A549 (cell line): ENCODE measurements at regions of chr3 and their contacts with region 1.

Region 1: GRCh38 chr3:111080413-111080812 is 8.8 kb downstream of the NECTIN3 start:
- DNase-seq: peak; percentile 33 to 39
- ATAC-seq: peak in 1 of 2 experiments; percentile 73; a peak in 3 of 6 replicates
- H3K4me3 ChIP-seq: no peak overlapping the region
- H3K27ac ChIP-seq: peak overlapping the region in 1 of 2 experiments; percentile 51; a peak in 3 of 6 replicates
- H3K4me1 ChIP-seq: peaks cover 50% of the 10 kb centered on the region
- CTCF ChIP-seq: peak; percentile 69
- EP300 ChIP-seq: no peak
- POLR2A ChIP-seq: no peak
- RAD21 ChIP-seq: peak; percentile 74 to 80

Region 2: DNA sequence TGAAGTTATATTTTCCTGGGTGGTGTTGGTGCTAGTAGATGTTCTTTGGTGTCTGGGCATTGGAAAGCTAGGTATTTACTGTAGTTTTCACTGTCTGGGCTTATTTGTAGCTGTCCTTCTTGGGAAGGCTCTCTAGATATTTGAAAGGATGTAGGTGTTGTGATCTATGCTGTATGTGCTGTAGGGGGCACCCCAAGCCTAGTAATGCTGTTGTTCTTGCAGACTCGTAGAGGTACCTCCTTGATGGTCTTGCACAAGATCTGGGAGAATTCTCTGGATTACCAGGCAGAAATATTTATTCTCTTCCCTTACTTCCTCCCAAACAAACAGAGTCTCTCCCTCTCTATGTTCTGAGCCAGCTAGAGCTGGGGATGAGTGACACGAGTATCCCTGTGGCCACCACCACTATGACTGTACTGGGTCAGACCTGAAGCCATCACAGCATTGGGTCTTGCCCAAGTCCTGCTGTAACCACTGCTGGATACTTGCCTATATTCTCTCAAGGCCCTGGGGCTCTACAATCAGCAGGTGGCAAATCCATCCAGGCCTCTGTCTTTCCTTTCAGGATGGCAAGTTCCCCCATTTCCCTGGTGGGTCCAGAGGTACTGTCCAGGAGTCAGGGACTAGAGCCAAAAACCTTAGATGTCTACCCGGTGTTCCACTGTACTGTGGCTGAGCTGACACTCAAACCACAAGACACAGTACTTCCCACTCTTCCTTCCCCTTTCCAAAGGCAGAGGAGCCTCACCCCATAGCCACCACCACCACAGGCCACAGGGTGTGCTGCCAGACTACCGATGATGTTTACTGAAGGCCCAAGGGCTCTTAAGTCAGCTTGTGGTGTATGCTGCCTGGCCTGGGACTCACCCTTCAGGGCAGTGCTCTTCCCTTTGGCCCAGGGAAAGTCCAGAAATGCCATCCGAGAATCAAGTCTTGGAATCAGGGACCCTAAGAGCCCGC is 1547.9 kb before region 1 on chr3:
- CTCF ChIA-PET with region 1: interaction called, 20 read pairs
- POLR2A ChIA-PET with region 1: no interaction called
- DNase-seq: peak in 1 of 2 experiments; percentile 81
- ATAC-seq: peak; percentile 70 to 92
- H3K4me3 ChIP-seq: no peak overlapping the region
- H3K27ac ChIP-seq: peak overlapping the region in 1 of 2 experiments; percentile 43; a peak in 3 of 6 replicates
- H3K4me1 ChIP-seq: 0 out of 3 replicates have a peak, but pooled peaks cover 4% of the 10 kb centered on the region
- CTCF ChIP-seq: peak; percentile 64
- EP300 ChIP-seq: no peak
- POLR2A ChIP-seq: no peak
- RAD21 ChIP-seq: peak; percentile 85 to 89